ENCODE measurements at regions of chr7 and their contacts with region 1.

Region 1: GRCh38 chr7:17234398-17235031 is 63.9 kb upstream of the AHR start:
- DNase-seq: peak in 1 of 2 donors; percentile 71
- H3K4me3 ChIP-seq: no peak overlapping the region
- H3K27ac ChIP-seq: peak overlapping the region; percentile 51 to 55
- H3K4me1 ChIP-seq: peaks cover 0 to 18% of the 10 kb centered on the region in 2 donors
- H3K27me3 ChIP-seq: no peaks in the 10 kb centered on the region
- CTCF ChIP-seq: no peak

Region 2: DNA sequence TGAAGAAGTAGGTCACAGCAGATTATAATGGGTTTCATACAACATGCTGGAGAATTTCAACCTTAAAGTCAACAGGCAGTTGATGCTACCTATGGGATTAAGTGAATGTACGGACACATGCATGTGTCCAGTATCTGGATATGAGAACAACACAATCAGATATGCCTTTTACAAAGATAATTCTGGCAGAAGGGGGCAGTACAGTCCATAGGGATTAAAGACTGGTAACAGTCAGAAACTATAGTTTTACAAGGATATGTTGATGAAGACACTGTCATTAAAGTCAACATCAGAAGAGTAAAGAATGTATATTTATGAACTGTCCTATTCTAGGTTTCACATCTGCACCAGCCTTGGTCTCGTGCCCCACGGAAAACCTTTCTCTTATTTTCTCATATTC is 630.5 kb before region 1 on chr7:
- intact Hi-C with region 1: no loop called
- DNase-seq: no peak
- H3K4me3 ChIP-seq: no peak overlapping the region
- H3K27ac ChIP-seq: no peak overlapping the region
- H3K4me1 ChIP-seq: no peaks in the 10 kb centered on the region
- H3K27me3 ChIP-seq: no peaks in the 10 kb centered on the region
- CTCF ChIP-seq: peak in 1 of 3 experiments; percentile 17

Region 3: DNA sequence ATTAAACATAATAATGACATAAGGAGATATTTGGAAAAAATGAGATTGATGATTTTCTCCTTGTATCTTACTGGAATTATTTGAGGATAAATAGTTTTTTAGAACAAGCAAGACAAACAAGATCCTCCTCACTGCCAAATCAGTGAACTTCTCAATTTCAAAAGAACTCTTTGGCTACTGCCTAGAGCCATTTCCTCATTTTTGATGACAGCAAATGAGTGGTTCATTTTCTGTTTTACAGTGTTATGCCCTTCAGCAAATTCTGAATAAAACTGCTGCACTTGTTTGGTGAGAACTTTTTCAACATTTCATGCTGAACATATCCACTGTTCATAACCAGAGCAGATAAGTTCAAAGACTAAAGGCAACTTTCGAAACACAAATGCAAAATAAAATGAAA is 21.4 kb after region 1 on chr7:
- intact Hi-C with region 1: no loop called
- DNase-seq: no peak
- H3K4me3 ChIP-seq: no peak overlapping the region
- H3K27ac ChIP-seq: no peak overlapping the region
- H3K4me1 ChIP-seq: no peaks in the 10 kb centered on the region
- H3K27me3 ChIP-seq: no peaks in the 10 kb centered on the region
- CTCF ChIP-seq: no peak

Region 4: GRCh38 chr7:17275749-17276671 is 41.5 kb after region 1 on chr7:
- intact Hi-C with region 1: loop called (anchors 2 kb)
- DNase-seq: peak in 1 of 2 donors; percentile 70
- H3K4me3 ChIP-seq: peak overlapping the region in 1 of 2 donors; percentile 13
- H3K27ac ChIP-seq: peak overlapping the region; percentile 63 to 70
- H3K4me1 ChIP-seq: peaks cover 0 to 17% of the 10 kb centered on the region in 2 donors
- H3K27me3 ChIP-seq: no peaks in the 10 kb centered on the region
- CTCF ChIP-seq: no peak

Region 5: GRCh38 chr7:17625043-17625442 is 390.5 kb after region 1 on chr7:
- intact Hi-C with region 1: no loop called
- DNase-seq: no peak
- H3K4me3 ChIP-seq: no peak overlapping the region
- H3K27ac ChIP-seq: no peak overlapping the region
- H3K4me1 ChIP-seq: peaks cover 0 to 4% of the 10 kb centered on the region in 2 donors
- H3K27me3 ChIP-seq: no peaks in the 10 kb centered on the region
- CTCF ChIP-seq: no peak

Measured in ascending aorta (tissue), 2 donors.